ENCODE measurements at regions of chr19 and their contacts with region 1.

Region 1: DNA sequence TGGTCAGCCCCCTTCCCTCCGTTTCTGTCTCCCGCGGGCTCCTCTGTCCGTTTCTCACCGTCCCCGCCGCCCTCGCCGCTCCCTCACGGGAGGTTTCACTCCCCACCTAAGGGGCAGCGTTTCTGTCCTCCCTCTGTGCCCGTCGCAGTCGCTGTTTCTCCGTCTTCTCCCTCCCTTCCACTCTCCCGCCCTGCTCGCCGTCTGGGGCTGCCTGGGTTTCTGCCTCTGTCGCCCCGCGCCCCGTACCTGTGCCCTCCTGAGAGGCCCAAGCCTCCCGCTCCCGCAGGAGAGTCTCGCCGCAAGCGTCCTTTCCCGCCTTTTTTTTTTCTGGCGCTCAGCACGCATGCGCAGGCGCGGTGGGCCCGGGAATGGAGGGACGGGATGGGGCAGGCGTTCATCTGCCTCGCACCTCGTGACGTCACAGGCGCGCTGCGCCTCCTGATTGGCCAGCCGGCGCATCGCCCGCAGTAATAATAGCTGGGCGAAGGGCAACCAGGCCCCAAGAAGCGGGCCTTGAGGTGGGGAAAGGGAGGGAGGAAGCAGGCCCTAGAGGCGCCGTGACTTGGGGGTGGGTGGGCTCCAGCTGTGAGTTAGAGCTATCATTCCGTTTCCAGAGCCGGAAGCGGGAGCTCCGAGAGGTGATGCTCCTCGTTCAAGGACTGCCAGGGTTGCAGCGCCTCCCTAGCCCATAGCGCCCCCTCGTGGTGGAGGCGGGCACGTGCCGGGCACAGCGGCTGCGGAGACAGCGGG is 15.4 kb downstream of the SSC5D start:
- DNase-seq: peak; percentile 95
- ATAC-seq: peak; percentile 95

Region 2: DNA sequence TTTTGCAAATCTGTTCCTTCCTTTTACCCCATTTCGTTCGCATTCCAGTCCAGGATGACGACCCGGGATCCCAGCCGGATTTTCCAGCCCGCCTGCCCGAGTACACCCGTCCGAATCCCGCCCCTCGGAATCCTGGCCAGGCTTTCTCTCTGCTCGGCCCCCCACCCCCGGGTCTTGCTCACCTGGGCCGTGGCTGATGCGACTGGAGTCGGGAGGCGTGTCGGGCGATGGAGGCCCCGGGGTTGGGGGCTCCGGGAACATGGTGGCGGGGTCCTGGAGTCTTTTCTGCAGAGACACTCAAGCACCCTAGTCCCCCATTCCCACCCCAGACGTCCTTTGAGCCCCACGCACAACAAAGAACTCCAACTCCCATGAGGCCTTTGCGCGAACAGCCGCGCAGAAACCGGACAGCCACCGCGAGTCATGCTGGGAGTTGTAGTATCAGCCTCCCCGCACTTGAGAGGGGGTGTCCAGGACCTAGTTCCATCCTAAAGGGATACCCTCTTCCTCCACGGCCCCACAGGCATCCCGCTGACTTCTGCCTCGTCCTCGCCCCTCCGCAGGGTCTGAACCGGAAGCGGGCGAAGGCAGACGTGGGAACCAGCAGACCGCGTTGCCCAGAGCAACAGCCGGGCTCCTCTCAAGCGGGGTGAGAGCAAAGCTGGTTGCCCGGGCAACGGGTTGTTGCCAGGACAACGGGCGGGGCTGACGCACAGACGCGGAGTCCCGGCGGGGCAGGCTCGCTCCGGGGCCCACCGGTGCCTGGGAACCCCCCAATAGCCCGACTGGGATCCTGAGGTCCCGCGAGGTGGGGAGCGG is 324.7 kb before region 1 on chr19:
- intact Hi-C with region 1: no loop called
- DNase-seq: peak; percentile 84
- ATAC-seq: peak; percentile 56

Region 3: GRCh38 chr19:55289117-55289796 is 214.4 kb before region 1 on chr19:
- intact Hi-C with region 1: loop called (anchors 5 kb)
- DNase-seq: peak; percentile 30
- ATAC-seq: no peak

Region 4: DNA sequence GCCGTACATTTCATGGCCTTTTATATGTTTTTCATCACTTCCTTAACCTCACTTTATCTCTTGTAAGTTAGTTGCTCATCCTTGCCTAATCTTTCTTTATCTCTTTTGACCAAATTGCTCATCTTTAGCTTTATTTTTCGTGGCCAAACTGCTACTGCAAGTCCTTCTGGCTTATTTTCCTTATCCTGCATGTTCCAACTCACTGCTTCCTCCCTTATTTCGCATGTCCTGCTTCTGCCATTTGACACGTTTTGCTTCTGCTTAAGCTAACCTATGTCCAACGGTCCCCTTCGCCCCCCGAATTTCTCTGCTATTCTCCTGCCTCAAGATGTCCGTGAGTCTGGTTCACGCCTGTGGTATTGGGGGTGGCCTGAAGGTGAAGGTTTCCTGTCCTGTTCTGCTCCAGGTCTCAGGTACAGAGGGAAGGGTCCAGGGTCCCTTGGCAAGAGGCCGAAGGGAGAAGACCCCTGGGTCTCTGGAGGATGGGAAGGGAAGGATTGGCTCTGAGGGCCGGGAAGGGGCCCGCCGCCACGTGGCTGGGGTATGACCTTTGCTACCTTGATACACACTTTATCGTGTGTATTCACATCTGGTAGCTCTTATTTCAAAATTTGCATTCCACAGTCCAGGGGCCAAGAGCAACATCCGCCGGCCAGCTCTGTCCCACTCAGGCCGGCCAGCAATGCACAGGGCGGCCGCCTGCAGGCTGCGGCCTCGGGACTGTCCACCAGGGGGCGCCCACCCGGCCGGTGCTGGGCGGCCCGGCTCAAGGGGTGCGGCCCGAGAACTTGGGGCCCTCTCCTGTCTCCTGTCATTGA is 36.2 kb before region 1 on chr19:
- intact Hi-C with region 1: loop called (anchors 2 kb)
- DNase-seq: peak; percentile 92
- ATAC-seq: peak; percentile 89

Region 5: DNA sequence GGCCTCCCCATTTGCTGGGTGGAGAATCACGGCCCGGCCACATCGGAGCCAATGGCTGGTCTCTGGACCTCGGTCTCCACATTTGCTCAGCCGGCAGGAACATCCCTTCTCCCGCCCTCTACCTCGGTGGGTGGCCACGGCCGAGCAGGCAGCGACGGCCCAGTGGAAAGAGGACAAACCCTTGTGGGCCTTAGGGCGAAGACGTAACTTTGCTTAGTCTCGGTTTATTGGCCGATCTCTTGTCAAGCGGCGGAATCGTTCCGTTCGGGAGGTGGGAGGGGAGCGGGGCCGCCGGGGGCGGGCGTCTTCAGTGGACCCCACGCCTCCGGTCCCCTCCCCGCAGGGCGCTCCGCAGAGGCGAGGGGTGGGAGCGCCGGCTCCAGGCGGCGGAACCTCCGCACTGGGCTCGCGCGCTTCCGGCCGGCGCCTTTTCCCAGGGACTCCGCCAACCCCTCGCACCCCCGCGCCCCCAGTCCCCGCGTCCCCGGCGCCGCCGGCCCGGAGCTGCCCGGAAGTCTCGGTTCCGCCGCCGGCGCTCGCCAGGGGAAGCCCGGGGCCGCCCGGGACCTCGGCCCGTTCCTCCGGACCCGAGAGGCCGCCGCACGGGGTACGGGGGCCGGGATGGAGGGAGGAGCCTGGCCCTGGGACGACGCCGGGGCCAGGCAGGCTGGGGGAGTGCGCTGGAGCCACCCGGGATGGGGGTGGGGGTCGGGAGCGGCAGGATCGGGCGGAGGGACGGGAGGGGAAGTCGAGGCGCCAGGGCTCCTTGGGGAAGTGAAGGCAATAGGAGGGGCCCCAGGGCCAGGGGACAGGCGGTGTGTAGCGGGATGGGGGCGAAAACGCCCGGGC is 137.1 kb after region 1 on chr19 and contains the start of gene ZNF580:
- intact Hi-C with region 1: no loop called
- DNase-seq: peak; percentile 86
- ATAC-seq: peak; percentile 67
- total RNA-seq, gene ZNF580: 13.2 TPM